GM10248 (cell line): ENCODE measurements at regions of chr17 and their contacts with region 1.

Region 1: DNA sequence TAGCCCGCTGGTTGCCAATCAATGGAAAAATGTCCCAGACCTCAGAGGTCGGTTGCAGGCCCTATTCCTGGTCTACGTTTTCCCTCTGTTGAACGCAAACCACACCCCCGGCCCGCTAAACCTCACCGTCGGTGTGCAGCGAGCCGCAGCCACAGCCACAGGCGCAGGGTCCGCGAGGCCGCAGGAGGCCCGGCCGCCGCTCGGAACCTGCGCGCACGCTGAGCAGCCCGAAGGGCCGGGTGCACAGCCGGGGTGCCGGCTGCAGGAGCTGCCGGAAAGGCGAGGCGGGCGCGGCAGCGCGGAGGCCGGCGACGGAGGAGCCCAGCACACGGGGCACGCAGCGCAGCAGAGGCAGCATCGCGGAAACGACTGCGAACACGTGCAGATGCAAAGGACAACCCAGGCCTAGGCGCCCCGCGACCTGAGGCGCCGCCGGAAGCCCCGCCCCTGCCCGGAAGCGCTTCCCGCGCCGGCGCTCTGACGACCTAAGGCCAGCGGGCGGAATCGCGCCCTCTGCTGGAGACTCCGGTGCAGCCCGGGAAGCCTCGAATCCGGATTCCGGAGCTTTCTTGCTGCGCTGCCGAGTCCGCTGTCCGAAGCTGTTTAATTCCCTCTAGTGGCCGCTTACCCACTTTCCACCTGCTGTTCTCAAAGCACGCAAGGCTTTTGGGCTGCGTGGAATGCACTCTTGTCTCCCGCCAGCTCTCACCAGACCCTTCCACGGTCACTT is at the start of gene C1QBP:
- DNase-seq: peak; percentile 95
- CTCF ChIP-seq: peak; percentile 92

Region 2: GRCh38 chr17:5249615-5250014 is 189.3 kb before region 1 on chr17:
- CTCF ChIA-PET with region 1: interaction called, 39 read pairs
- POLR2A ChIA-PET with region 1: no interaction called
- DNase-seq: peak; percentile 77
- CTCF ChIP-seq: peak; percentile 66

Region 3: DNA sequence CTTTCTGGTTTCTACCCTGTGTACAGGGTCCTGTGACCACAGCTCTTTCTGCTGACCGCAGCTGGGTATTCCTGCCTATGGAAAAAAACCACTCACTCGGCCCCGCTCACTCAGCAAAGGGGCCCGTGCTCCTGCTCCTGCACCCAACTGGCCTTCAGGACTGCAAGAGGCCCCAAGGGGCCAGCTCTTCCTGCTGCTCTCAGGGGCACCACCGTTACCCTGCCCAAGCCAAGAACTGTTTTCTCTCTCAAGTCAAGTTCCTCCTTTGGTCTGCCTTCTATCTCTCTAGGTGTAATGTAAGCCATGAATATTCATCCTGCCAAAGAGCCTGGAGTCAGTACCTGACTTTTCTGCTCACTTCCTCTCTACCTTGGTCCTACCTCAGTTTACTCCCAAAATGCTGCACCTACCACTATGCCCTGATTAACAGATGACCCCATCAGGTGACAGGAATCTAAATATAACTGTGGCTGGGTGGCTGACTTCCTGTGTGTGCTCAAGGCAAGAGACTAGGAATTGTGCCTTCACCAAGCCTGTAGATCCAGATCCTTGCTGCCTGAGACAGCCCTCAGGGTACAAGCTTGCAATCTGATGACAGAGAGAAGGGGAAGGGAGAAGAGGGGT is 183.9 kb before region 1 on chr17:
- CTCF ChIA-PET with region 1: interaction called, 39 read pairs
- POLR2A ChIA-PET with region 1: no interaction called
- DNase-seq: peak; percentile 38
- CTCF ChIP-seq: no peak

Region 4: DNA sequence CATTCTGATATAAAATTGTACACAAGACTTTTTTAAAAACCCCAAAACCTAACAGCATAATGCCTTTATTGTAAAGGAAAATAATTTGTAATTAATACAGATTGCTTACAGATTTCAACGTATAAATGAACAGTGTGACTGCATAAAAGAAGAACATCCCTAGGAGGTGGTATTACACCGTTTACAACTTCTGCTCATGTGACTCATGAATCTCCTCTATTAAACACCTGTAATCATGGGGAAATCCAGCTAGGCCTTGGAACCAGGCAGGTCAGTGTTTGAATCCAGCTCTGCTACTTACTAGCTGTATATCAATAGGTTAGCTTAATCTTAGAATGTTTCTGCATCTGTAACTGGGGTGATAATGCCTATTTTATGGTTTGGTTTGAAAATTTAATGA is 141.6 kb before region 1 on chr17:
- CTCF ChIA-PET with region 1: interaction called, 12 read pairs
- POLR2A ChIA-PET with region 1: interaction called, 4 read pairs
- DNase-seq: no peak
- CTCF ChIP-seq: no peak

Region 5: GRCh38 chr17:5413682-5414081 is 25.2 kb before region 1 on chr17:
- CTCF ChIA-PET with region 1: interaction called, 11 read pairs
- POLR2A ChIA-PET with region 1: no interaction called
- DNase-seq: no peak
- CTCF ChIP-seq: no peak

Region 6: GRCh38 chr17:5419356-5419958 is 19.4 kb before region 1 on chr17 and contains the start of gene NUP88:
- CTCF ChIA-PET with region 1: interaction called, 28 read pairs
- POLR2A ChIA-PET with region 1: interaction called, 4 read pairs
- DNase-seq: peak; percentile 97
- CTCF ChIP-seq: no peak

Region 7: GRCh38 chr17:5468075-5468473 is 29.2 kb after region 1 on chr17:
- CTCF ChIA-PET with region 1: interaction called, 16 read pairs
- POLR2A ChIA-PET with region 1: no interaction called
- DNase-seq: peak; percentile 34
- CTCF ChIP-seq: no peak